ENCODE measurements at regions of chr13 and their contacts with region 1.

Region 1: DNA sequence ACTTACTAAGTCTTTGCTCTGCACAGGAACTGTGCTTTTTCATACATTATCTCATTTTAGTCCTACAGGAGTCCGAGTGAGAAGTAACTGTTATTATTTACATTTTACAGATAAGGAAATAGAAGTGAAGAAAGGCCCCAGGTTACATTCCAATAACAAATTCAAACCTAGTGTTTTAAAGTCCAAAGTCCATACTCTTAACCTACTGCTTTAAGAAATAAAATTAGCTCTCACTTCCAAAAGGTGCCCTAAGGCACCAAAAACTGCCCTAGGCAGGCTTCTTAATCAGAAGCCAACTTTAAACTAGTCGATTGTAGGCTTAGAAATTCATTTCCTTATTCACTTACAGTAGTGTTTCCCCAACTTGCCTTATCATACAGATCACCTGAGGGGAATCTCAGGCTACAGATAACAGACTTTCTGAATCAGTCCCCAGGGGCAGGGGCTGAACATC is 555.9 kb downstream of the DIAPH3 start:
- DNase-seq: no peak
- H3K4me3 Mint-ChIP-seq: no peak overlapping the region
- H3K27ac Mint-ChIP-seq: no peak overlapping the region
- H3K4me1 Mint-ChIP-seq: no peaks in the 10 kb centered on the region
- H3K27me3 Mint-ChIP-seq: peaks cover 15% of the 10 kb centered on the region
- CTCF ChIP-seq: no peak

Region 2: DNA sequence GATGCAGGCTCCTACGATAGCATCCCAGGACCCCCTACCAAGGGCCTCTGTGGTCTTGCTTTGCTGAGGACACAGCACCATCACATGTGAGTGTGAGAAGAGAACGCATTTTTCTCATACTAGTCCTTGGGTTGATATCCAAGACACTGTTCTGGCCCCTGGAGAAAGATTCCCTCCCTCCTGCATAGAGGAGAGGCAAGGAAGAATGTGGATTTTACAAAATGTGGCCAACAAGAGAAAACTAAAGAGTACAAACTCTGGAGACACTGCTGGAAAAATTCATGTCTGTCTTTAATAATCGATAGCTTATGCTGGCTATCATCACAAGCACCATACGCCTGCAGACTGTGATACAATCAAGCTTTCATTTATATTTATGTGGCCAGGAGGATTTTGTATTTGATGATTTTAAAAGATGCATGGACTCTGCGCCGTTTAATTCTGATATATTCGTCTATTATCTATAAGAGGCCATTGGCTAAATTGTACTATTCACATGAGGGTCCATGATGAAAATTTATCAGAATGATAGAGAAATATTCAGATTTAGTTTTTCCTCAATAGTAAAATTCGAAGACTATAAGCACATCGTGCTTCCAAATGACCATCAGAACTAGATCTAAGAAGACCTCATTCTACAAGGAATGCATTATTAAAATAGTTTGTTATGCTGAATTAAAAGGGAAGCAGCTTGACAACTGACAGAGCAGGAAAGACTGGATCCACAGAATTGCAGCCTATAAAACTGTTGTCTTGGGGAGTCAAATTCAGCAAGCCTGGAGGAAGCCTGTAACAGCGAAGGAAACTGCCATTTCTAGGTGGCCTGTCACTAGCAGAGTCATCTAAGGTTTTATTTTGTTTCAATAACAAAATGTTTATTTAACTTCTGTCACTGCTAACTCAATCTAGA is 22.8 kb before region 1 on chr13:
- CTCF ChIA-PET with region 1: no interaction called
- POLR2A ChIA-PET with region 1: no interaction called
- intact Hi-C with region 1: loop called (anchors 1 kb)
- DNase-seq: no peak
- H3K4me3 Mint-ChIP-seq: no peak overlapping the region
- H3K27ac Mint-ChIP-seq: no peak overlapping the region
- H3K4me1 Mint-ChIP-seq: no peaks in the 10 kb centered on the region
- H3K27me3 Mint-ChIP-seq: peaks cover 85% of the 10 kb centered on the region
- CTCF ChIP-seq: no peak

Region 3: DNA sequence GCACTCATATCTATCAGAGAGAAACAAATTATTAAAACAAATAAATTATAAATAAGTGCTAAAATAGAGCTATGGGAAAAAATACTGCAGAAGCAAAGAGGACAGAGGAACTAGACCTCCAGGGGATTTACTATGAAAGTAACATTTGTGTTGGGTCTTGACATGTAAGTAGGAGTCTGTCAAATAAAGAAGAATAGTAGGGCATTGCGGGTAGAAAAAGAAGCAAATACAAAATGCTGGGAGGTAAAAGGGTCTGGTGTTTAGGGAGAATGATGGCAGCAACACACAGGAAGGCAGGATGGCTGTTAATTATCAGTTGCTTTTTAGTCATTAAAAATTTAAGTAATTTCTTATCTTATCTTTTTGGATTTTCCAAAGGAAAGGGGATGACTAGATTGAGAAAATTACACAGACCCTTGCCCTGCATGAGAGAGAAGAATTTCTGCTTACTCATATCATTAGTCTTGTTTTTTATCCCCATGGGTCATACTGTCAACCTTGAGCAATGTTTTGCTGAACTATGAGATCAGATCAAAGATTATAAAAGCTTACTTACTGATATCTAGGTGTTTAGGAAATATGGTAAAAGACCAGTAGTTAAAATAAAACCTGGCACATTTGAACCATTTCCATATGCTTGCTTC is 83.2 kb after region 1 on chr13:
- CTCF ChIA-PET with region 1: no interaction called
- POLR2A ChIA-PET with region 1: no interaction called
- intact Hi-C with region 1: no loop called
- DNase-seq: no peak
- H3K4me3 Mint-ChIP-seq: no peak overlapping the region
- H3K27ac Mint-ChIP-seq: no peak overlapping the region
- H3K4me1 Mint-ChIP-seq: no peaks in the 10 kb centered on the region
- H3K27me3 Mint-ChIP-seq: no peaks in the 10 kb centered on the region
- CTCF ChIP-seq: no peak